ENCODE measurements at regions of chr3 and their contacts with region 1.

Region 1: GRCh38 chr3:115217678-115218451 is 70.8 kb upstream of the ZBTB20 start:
- DNase-seq: peak; percentile 22 to 77
- ATAC-seq: peak; percentile 88 to 93
- H3K4me3 ChIP-seq: no peak overlapping the region
- H3K27ac ChIP-seq: peak overlapping the region; percentile 44 to 65; a peak in 5 of 6 replicates
- H3K4me1 ChIP-seq: peaks cover 20% of the 10 kb centered on the region
- CTCF ChIP-seq: peak; percentile 89
- EP300 ChIP-seq: no peak
- POLR2A ChIP-seq: no peak
- RAD21 ChIP-seq: peak; percentile 93

Region 2: GRCh38 chr3:114380233-114380651 is 837.6 kb before region 1 on chr3:
- CTCF ChIA-PET with region 1: no interaction called
- POLR2A ChIA-PET with region 1: no interaction called
- DNase-seq: peak in 1 of 2 experiments; percentile 6
- ATAC-seq: no peak
- H3K4me3 ChIP-seq: no peak overlapping the region
- H3K27ac ChIP-seq: no peak overlapping the region
- H3K4me1 ChIP-seq: peaks cover 6% of the 10 kb centered on the region; the same call in 1 of the 3 replicates
- CTCF ChIP-seq: no peak
- EP300 ChIP-seq: no peak
- POLR2A ChIP-seq: no peak
- RAD21 ChIP-seq: no peak

Region 3: GRCh38 chr3:115239717-115240116 is 21.9 kb after region 1 on chr3:
- CTCF ChIA-PET with region 1: interaction called, 11 read pairs
- POLR2A ChIA-PET with region 1: no interaction called
- DNase-seq: peak; percentile 83 to 96
- ATAC-seq: peak; percentile 100
- H3K4me3 ChIP-seq: no peak overlapping the region
- H3K27ac ChIP-seq: peak overlapping the region; percentile 48 to 56
- H3K4me1 ChIP-seq: peaks cover 19% of the 10 kb centered on the region
- CTCF ChIP-seq: no peak
- EP300 ChIP-seq: peak; percentile 40 to 65; a peak in 2 of 5 replicates
- POLR2A ChIP-seq: no peak
- RAD21 ChIP-seq: peak in 1 of 2 experiments; percentile 11; a peak in 1 of 5 replicates

Region 4: GRCh38 chr3:115272036-115272824 is 54.4 kb after region 1 on chr3:
- CTCF ChIA-PET with region 1: no interaction called
- POLR2A ChIA-PET with region 1: no interaction called
- DNase-seq: peak in 1 of 2 experiments; percentile 17
- ATAC-seq: no peak
- H3K4me3 ChIP-seq: no peak overlapping the region
- H3K27ac ChIP-seq: no peak overlapping the region
- H3K4me1 ChIP-seq: no peaks in the 10 kb centered on the region
- CTCF ChIP-seq: no peak
- EP300 ChIP-seq: no peak
- POLR2A ChIP-seq: no peak
- RAD21 ChIP-seq: no peak

Region 5: DNA sequence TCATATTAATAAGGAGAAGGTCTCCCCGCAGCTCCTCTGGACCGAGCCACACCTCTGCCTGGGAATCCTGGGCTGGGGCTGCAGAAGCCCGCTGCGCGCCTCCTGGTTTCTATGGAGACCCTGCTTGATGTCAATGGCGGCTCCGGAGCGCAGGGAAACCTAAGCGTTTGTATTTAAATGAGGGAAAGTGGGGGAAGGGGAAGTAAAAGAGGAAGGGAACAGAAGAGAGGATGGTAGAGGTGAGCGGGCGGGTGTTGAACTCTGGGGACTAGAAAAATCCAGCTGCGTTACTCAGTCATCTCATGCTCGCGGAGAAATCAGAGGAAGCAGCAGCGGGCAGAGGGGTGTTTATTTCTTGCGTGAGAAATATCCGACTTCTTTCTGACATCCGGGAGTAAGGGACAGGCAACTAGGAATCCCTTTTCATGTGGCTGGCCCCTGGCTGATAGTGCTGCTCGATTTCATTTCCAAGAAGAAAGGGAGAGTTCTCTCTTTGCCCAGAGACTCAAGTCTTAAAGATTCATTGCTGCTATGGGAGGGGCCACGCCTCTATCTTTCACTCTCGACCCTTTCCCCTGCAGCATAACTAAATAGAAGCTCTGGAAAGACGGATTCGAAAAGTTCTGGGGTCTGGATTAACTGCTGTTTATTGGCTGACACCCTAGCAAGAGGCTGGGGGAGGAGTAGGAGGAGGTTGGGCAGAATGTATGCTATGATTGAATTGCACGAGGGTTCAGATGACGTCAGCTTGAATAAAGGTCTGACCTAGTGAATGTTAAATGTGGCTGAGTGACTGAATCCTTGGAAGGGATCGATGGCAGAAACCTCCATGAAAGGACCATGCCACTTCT is 294.9 kb after region 1 on chr3:
- CTCF ChIA-PET with region 1: interaction called, 11 read pairs
- POLR2A ChIA-PET with region 1: no interaction called
- DNase-seq: peak; percentile 11 to 13
- ATAC-seq: peak; percentile 74 to 87
- H3K4me3 ChIP-seq: peak overlapping the region; percentile 53
- H3K27ac ChIP-seq: peak overlapping the region in 1 of 2 experiments; percentile 20; a peak in 2 of 6 replicates
- H3K4me1 ChIP-seq: no peaks in the 10 kb centered on the region
- CTCF ChIP-seq: no peak
- EP300 ChIP-seq: no peak
- POLR2A ChIP-seq: no peak
- RAD21 ChIP-seq: no peak

Region 6: GRCh38 chr3:115687721-115688120 is 469.9 kb after region 1 on chr3:
- CTCF ChIA-PET with region 1: interaction called, 39 read pairs
- POLR2A ChIA-PET with region 1: interaction called, 3 read pairs
- DNase-seq: no peak
- ATAC-seq: no peak
- H3K4me3 ChIP-seq: no peak overlapping the region
- H3K27ac ChIP-seq: no peak overlapping the region
- H3K4me1 ChIP-seq: peaks cover 2% of the 10 kb centered on the region; the same call in 1 of the 3 replicates
- CTCF ChIP-seq: no peak
- EP300 ChIP-seq: no peak
- POLR2A ChIP-seq: no peak
- RAD21 ChIP-seq: no peak

Region 7: GRCh38 chr3:115766587-115767480 is 549.0 kb after region 1 on chr3:
- CTCF ChIA-PET with region 1: interaction called, 11 read pairs
- POLR2A ChIA-PET with region 1: no interaction called
- DNase-seq: no peak
- ATAC-seq: peak in 1 of 2 experiments; percentile 41; a peak in 1 of 6 replicates
- H3K4me3 ChIP-seq: no peak overlapping the region
- H3K27ac ChIP-seq: peak overlapping the region in 1 of 2 experiments; percentile 14; a peak in 2 of 6 replicates
- H3K4me1 ChIP-seq: peaks cover 9% of the 10 kb centered on the region; the same call in 2 of the 3 replicates
- CTCF ChIP-seq: no peak
- EP300 ChIP-seq: no peak
- POLR2A ChIP-seq: no peak
- RAD21 ChIP-seq: no peak

Region 8: DNA sequence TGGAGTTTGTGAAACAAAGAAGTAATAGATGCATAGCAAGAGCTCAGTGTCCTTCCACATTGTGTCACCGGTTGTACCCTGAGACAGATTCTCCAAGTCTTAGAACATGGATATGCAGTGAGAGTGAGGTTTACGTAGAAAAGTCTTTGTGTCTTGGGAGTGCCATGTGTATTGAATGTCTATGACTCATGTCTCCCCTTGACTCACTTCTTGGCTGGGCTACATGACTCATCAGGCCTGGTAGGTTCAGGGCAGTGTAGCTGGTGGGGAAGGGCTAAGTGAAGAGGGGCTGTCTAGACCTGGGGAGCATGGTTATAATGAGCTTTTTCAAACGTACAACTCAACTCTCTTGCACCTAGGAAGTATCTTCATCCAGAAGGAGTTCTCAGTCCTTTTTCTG is 572.9 kb after region 1 on chr3:
- CTCF ChIA-PET with region 1: interaction called, 40 read pairs
- POLR2A ChIA-PET with region 1: no interaction called
- DNase-seq: peak; percentile 94 to 96
- ATAC-seq: peak; percentile 93 to 97
- H3K4me3 ChIP-seq: no peak overlapping the region
- H3K27ac ChIP-seq: peak overlapping the region; percentile 78 to 92
- H3K4me1 ChIP-seq: peaks cover 50% of the 10 kb centered on the region
- CTCF ChIP-seq: no peak
- EP300 ChIP-seq: no peak
- POLR2A ChIP-seq: no peak
- RAD21 ChIP-seq: no peak

Measured in A549 (cell line).